ENCODE measurements at regions of chr16 and their contacts with region 1.

Region 1: DNA sequence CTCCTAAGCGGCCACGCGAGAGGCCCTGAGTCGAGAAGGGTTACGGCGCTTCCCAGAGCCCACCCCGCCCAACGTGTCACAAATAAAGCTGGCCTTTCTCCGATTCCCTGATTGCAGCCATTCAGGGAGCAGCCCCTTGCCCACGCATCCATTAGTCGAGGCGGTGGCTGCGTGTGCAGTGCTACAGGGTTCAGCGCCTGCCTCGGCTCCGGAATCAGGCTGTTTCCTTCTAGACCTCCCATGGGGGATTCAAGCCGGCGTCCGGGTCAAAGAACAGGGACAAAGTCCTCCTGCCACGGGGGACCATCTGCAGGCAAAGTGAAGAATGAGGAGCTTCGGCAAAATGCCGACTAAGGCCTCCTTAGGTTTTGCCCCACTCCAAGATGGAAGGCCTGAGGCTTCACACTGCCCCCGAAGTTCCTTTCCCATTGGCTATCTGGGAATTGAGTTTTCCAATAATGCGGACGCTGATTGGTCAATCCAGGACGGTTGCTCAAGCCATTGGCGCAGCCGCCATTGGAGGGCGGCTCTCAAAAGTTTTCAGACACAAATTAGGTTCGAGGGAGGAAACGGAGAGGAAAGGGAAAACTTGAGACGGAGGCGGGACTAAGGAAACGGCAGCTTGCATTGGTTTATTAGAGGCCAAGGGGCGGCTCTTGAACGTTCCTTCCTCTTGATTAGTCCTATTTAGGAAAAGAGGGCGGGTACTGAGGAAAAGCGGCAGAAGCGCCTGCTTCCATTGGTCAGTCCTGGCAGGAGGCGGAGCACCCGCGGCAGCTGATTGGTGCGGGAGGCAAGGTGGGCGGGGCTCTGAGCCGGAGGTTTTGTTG is 430 bp upstream of the KATNB1 start:
- DNase-seq: peak; percentile 88 to 100 (median 98)
- ATAC-seq: peak; percentile 96
- H3K4me3 ChIP-seq: peak overlapping the region; percentile 93
- H3K4me3 Mint-ChIP-seq: peak overlapping the region; percentile 90 to 99 (median 96)
- H3K27ac ChIP-seq: peak overlapping the region; percentile 80
- H3K27ac Mint-ChIP-seq: peak overlapping the region; percentile 81 to 98 (median 93)
- H3K4me1 ChIP-seq: peaks cover 12 to 14% of the 10 kb centered on the region in 2 donors
- H3K4me1 Mint-ChIP-seq: peaks cover 14 to 38% (median 26%) of the 10 kb centered on the region in 7 donors
- H3K27me3 ChIP-seq: no peaks in the 10 kb centered on the region
- H3K27me3 Mint-ChIP-seq: no peaks in the 10 kb centered on the region

Region 2: GRCh38 chr16:56608043-56608875 is 1126.9 kb before region 1 on chr16 and contains the start of gene MT2A:
- CTCF ChIA-PET with region 1: no interaction called
- POLR2A ChIA-PET with region 1: no interaction called
- intact Hi-C with region 1: loop called in 1 of 2 experiments (anchors 2 kb)
- DNase-seq: peak; percentile 70 to 89 (median 84)
- ATAC-seq: peak; percentile 88
- H3K4me3 ChIP-seq: peak within 1 kb of the TSS; percentile 97
- H3K4me3 Mint-ChIP-seq: peak within 1 kb of the TSS; percentile 85 to 100 (median 96)
- H3K27ac ChIP-seq: peak within 1 kb of the TSS; percentile 94
- H3K27ac Mint-ChIP-seq: peak within 1 kb of the TSS; percentile 85 to 99 (median 93)
- H3K4me1 ChIP-seq: peaks cover 29 to 34% of the 10 kb centered on the region in 2 donors
- H3K4me1 Mint-ChIP-seq: peaks cover 35 to 52% (median 47%) of the 10 kb centered on the region in 7 donors
- H3K27me3 ChIP-seq: no peaks in the 10 kb centered on the region
- H3K27me3 Mint-ChIP-seq: no peaks in the 10 kb centered on the region
- total RNA-seq, gene MT2A: 15.0 to 435 (median 32.8) TPM

Region 3: GRCh38 chr16:57204675-57205074 is 530.5 kb before region 1 on chr16:
- CTCF ChIA-PET with region 1: no interaction called
- POLR2A ChIA-PET with region 1: no interaction called
- intact Hi-C with region 1: no loop called
- DNase-seq: no peak
- ATAC-seq: no peak
- H3K4me3 ChIP-seq: no peak overlapping the region
- H3K4me3 Mint-ChIP-seq: no peak overlapping the region
- H3K27ac ChIP-seq: no peak overlapping the region
- H3K27ac Mint-ChIP-seq: no peak overlapping the region
- H3K4me1 ChIP-seq: no peaks in the 10 kb centered on the region
- H3K4me1 Mint-ChIP-seq: peaks cover 0 to 13% (median 6%) of the 10 kb centered on the region in 7 donors
- H3K27me3 ChIP-seq: no peaks in the 10 kb centered on the region
- H3K27me3 Mint-ChIP-seq: no peaks in the 10 kb centered on the region

Region 4: DNA sequence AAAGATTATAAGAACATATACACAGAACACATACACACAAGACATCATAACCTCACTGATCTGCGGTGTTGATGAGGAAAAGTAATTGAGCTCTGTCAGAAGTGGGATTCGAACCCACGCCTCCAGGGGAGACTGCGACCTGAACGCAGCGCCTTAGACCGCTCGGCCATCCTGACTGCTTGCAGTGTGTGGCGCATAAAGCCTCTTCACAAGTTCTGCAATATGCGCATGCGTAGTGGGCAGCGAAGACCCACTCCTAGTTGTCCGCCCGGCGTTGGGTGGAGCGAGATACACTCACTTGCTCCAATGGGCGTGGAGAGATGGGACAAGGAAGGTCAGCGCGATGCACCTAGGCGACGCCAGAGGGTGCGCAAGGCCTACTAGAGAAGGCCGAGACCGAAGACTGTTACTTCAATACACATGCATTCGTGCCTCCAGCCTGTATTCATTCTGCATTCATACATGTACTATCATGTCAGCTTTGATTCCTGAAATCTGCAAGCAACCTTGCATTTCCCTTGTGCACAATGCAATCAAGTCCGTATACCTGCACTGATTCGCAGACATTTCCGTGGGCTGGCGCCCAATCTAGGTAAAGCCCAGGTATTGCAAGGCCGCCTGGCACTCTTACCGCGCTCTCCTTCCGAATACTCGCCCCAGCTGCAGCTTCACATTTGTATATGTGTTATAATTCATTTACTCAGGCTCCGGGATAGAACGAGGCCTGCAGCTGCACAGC is 434.6 kb before region 1 on chr16:
- CTCF ChIA-PET with region 1: no interaction called
- POLR2A ChIA-PET with region 1: no interaction called
- intact Hi-C with region 1: loop called (anchors 1 kb)
- DNase-seq: peak; percentile 98 to 100 (median 99)
- ATAC-seq: peak; percentile 96
- H3K4me3 ChIP-seq: peak overlapping the region; percentile 65
- H3K4me3 Mint-ChIP-seq: no peak overlapping the region
- H3K27ac ChIP-seq: peak overlapping the region; percentile 75
- H3K27ac Mint-ChIP-seq: no peak overlapping the region
- H3K4me1 ChIP-seq: peaks cover 16 to 28% of the 10 kb centered on the region in 2 donors
- H3K4me1 Mint-ChIP-seq: peaks cover 4 to 24% (median 11%) of the 10 kb centered on the region in 7 donors
- H3K27me3 ChIP-seq: no peaks in the 10 kb centered on the region
- H3K27me3 Mint-ChIP-seq: peaks cover 0 to 4% (median 0%) of the 10 kb centered on the region in 5 donors

Region 5: DNA sequence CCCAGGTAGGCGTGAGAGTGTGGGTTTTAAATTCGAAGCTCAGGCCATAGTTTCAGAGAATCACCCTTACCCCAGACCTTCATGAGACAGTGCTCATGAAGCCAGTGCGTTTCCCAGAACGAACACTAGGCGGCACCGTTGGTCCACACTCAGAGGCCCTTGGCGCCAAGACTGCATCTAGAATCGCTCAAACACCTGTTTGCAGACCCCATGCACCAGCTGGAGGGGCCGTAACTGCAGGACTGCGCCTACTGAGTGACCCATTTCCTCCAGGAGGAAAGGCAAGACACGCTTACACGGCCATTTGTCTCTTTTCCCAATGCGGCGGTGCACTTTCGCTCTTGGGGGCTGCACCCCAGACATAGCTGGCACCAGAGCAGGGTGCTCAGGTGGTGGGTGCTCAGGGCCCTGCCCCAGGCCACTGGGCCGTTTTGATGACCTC is 158.7 kb before region 1 on chr16:
- CTCF ChIA-PET with region 1: interaction called, 4 read pairs
- POLR2A ChIA-PET with region 1: no interaction called
- intact Hi-C with region 1: loop called (anchors 1 to 5 kb)
- DNase-seq: peak; percentile 55 to 83 (median 72)
- ATAC-seq: peak; percentile 87
- H3K4me3 ChIP-seq: no peak overlapping the region
- H3K4me3 Mint-ChIP-seq: no peak overlapping the region
- H3K27ac ChIP-seq: no peak overlapping the region
- H3K27ac Mint-ChIP-seq: peak overlapping the region in 1 of 9 donors; percentile 96
- H3K4me1 ChIP-seq: peaks cover 0 to 44% of the 10 kb centered on the region in 2 donors
- H3K4me1 Mint-ChIP-seq: peaks cover 0 to 45% (median 6%) of the 10 kb centered on the region in 7 donors
- H3K27me3 ChIP-seq: no peaks in the 10 kb centered on the region
- H3K27me3 Mint-ChIP-seq: peaks cover 0 to 6% (median 4%) of the 10 kb centered on the region in 5 donors

Region 6: DNA sequence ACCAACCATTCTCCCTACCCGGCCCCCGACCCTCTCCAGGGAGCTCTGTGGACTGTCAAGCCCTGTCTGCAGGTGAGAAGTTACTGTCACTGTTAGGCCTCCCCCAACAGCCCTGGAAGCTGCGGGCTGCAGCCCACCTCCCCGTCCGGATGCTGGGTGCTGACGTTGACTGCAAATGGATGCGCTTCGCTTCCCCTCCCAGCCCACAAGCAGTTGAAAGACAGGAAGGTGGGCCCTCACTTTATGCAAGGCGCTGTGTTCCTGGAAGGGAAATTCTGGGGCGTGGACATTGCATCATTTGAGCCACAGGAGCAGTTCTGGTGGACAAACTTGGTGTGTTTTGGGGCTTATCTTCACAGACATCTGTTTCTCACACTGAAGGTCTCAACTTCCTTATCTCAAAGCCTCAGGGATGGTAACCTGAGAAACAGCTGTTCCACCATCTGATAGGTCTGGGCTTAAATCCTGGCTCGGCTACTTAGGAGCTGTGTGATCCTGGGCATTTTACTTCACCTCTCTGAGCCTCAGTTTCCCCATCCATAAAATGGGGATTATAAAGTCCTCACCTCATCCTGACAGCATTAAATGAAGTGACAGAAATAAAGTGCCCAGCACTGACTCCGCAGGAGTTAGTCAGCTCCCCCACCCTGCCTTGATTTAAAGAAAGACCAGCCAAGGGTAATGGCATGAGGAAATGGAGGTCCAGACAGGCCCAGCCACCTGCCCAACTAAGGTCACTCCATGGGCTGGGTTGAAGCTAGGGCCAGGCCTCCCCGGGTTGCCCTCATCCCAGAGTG is 45.2 kb before region 1 on chr16:
- CTCF ChIA-PET with region 1: no interaction called
- POLR2A ChIA-PET with region 1: interaction called, 6 read pairs
- intact Hi-C with region 1: loop called (anchors 1 to 5 kb)
- DNase-seq: peak in 8 of 9 donors; percentile 39 to 72 (median 59)
- ATAC-seq: peak; percentile 86
- H3K4me3 ChIP-seq: no peak overlapping the region
- H3K4me3 Mint-ChIP-seq: peak overlapping the region; percentile 25 to 83 (median 61)
- H3K27ac ChIP-seq: peak overlapping the region; percentile 56
- H3K27ac Mint-ChIP-seq: peak overlapping the region; percentile 86 to 91 (median 90)
- H3K4me1 ChIP-seq: peaks cover 10 to 12% of the 10 kb centered on the region in 2 donors
- H3K4me1 Mint-ChIP-seq: peaks cover 13 to 26% (median 17%) of the 10 kb centered on the region in 7 donors
- H3K27me3 ChIP-seq: no peaks in the 10 kb centered on the region
- H3K27me3 Mint-ChIP-seq: peaks cover 0 to 9% (median 0%) of the 10 kb centered on the region in 5 donors

Region 7: GRCh38 chr16:57700781-57701551 is 34.2 kb before region 1 on chr16:
- CTCF ChIA-PET with region 1: no interaction called
- POLR2A ChIA-PET with region 1: no interaction called
- intact Hi-C with region 1: no loop called
- DNase-seq: no peak
- ATAC-seq: no peak
- H3K4me3 ChIP-seq: no peak overlapping the region
- H3K4me3 Mint-ChIP-seq: no peak overlapping the region
- H3K27ac ChIP-seq: no peak overlapping the region
- H3K27ac Mint-ChIP-seq: no peak overlapping the region
- H3K4me1 ChIP-seq: no peaks in the 10 kb centered on the region
- H3K4me1 Mint-ChIP-seq: no peaks in the 10 kb centered on the region
- H3K27me3 ChIP-seq: no peaks in the 10 kb centered on the region
- H3K27me3 Mint-ChIP-seq: peaks cover 0 to 5% (median 0%) of the 10 kb centered on the region in 5 donors

Region 8: GRCh38 chr16:57826706-57827625 is 91.8 kb after region 1 on chr16:
- CTCF ChIA-PET with region 1: no interaction called
- POLR2A ChIA-PET with region 1: no interaction called
- intact Hi-C with region 1: no loop called
- DNase-seq: no peak
- ATAC-seq: no peak
- H3K4me3 ChIP-seq: no peak overlapping the region
- H3K4me3 Mint-ChIP-seq: no peak overlapping the region
- H3K27ac ChIP-seq: no peak overlapping the region
- H3K27ac Mint-ChIP-seq: no peak overlapping the region
- H3K4me1 ChIP-seq: no peaks in the 10 kb centered on the region
- H3K4me1 Mint-ChIP-seq: no peaks in the 10 kb centered on the region
- H3K27me3 ChIP-seq: no peaks in the 10 kb centered on the region
- H3K27me3 Mint-ChIP-seq: peaks cover 0 to 25% (median 4%) of the 10 kb centered on the region in 5 donors

Region 9: DNA sequence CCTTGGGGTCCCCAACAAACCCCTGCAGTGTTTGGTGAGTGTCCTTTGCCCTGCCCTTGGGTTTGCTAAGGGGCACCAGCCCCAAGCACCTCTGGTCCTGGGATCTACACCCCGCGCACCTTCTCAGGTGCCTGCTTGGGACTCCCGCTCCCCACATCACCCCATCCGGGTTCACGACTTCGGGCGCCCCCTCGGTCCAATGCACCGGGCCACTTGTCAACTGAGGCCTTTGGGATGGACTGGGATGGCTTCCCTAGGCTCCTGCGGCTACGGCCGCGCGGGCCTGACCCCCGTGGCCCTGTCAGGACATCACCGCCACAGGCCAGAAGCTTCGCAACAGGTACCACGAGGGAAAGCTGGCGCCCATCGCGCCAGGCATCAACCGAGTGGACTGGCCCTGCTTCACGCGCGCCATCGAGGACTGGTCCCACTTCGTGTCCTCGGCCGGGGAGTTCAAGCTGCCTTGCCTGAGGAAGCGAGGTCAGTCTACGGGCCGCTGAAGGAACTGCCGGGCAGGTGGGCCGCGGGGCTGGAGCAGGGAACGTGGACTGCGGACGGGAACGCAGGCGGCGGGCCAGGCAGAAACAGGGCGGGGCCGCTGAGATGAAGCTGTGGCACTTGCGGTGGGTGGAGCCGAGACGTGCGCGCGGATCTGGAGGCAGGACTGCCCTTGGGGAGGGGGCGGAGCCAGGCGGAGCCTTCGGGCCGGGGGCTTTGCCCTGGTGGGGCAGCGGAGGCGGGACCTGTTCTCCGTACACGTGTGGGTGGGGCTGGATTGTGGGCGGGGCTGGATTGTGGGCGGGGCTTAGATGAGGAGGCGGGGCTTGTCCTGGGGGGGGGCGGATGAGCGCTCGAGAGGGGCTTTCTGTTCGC is 249.4 kb after region 1 on chr16:
- CTCF ChIA-PET with region 1: no interaction called
- POLR2A ChIA-PET with region 1: no interaction called
- intact Hi-C with region 1: loop called (anchors 1 kb)
- DNase-seq: peak; percentile 75 to 93 (median 90)
- ATAC-seq: peak; percentile 99
- H3K4me3 ChIP-seq: peak overlapping the region; percentile 63
- H3K4me3 Mint-ChIP-seq: peak overlapping the region; percentile 84 to 94 (median 91)
- H3K27ac ChIP-seq: peak overlapping the region; percentile 64
- H3K27ac Mint-ChIP-seq: peak overlapping the region; percentile 37 to 93 (median 72)
- H3K4me1 ChIP-seq: peaks cover 6% of the 10 kb centered on the region in 2 donors
- H3K4me1 Mint-ChIP-seq: peaks cover 2 to 21% (median 8%) of the 10 kb centered on the region in 7 donors
- H3K27me3 ChIP-seq: no peaks in the 10 kb centered on the region
- H3K27me3 Mint-ChIP-seq: peaks cover 0 to 21% (median 0%) of the 10 kb centered on the region in 5 donors

Region 10: DNA sequence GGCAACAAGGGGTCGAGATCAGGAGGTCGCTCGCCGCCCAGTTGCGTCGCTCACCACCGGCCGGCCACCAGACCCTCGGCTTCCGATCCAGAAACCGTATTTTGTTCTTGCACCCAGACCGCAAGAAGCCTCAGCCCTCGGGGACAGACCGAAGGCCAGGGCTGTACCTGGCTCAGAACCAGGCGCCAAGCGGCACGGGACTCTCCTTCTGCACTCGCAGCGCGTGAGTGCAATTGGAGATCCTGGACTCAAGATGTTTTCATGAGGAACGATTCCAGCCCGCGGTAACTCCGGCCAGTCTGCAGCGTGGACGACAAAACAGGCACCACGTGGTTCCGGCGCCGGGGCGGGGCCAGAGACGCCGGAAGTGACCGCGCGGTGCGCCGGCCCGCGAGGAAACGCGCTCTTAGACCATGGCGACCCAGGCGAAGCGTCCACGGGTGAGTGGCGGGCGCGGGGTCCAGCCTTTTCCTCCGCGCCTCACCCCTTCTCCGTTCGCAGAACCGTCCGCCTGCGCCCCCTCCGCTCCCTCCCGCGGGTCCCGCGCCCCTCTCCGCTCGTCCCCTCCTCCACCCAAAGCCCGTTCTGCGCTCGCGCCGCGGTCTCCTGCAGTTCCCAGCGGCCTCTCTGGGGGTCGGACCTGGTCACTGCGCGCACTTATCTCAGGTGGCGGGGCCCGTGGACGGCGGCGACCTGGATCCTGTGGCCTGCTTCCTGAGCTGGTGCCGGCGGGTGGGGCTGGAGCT is 780.2 kb after region 1 on chr16 and contains the start of gene SETD6:
- CTCF ChIA-PET with region 1: no interaction called
- POLR2A ChIA-PET with region 1: no interaction called
- intact Hi-C with region 1: loop called in 1 of 2 experiments (anchors 2 kb)
- DNase-seq: peak; percentile 49 to 89 (median 61)
- ATAC-seq: peak; percentile 85
- H3K4me3 ChIP-seq: peak within 1 kb of the TSS; percentile 82
- H3K4me3 Mint-ChIP-seq: peak within 1 kb of the TSS; percentile 78 to 95 (median 88)
- H3K27ac ChIP-seq: peak within 1 kb of the TSS; percentile 81
- H3K27ac Mint-ChIP-seq: peak within 1 kb of the TSS; percentile 69 to 95 (median 87)
- H3K4me1 ChIP-seq: peaks cover 7 to 10% of the 10 kb centered on the region in 2 donors
- H3K4me1 Mint-ChIP-seq: peaks cover 9 to 40% (median 26%) of the 10 kb centered on the region in 7 donors
- H3K27me3 ChIP-seq: no peaks in the 10 kb centered on the region
- H3K27me3 Mint-ChIP-seq: no peaks in the 10 kb centered on the region
- total RNA-seq, gene SETD6: 20.7 to 41.3 (median 39.0) TPM

Region 11: GRCh38 chr16:59566446-59566845 is 1831.3 kb after region 1 on chr16:
- CTCF ChIA-PET with region 1: no interaction called
- POLR2A ChIA-PET with region 1: no interaction called
- intact Hi-C with region 1: no loop called
- DNase-seq: no peak
- ATAC-seq: no peak
- H3K4me3 ChIP-seq: no peak overlapping the region
- H3K4me3 Mint-ChIP-seq: no peak overlapping the region
- H3K27ac ChIP-seq: no peak overlapping the region
- H3K27ac Mint-ChIP-seq: no peak overlapping the region
- H3K4me1 ChIP-seq: no peaks in the 10 kb centered on the region
- H3K4me1 Mint-ChIP-seq: no peaks in the 10 kb centered on the region
- H3K27me3 ChIP-seq: no peaks in the 10 kb centered on the region
- H3K27me3 Mint-ChIP-seq: no peaks in the 10 kb centered on the region